ENCODE measurements at regions of chr17 and their contacts with region 1.

Region 1: GRCh38 chr17:74671031-74671771 is 41.5 kb downstream of the CD300LF start:
- DNase-seq: peak; percentile 88
- H3K4me3 ChIP-seq: no peak overlapping the region
- H3K27ac ChIP-seq: no peak overlapping the region
- H3K4me1 ChIP-seq: no peaks in the 10 kb centered on the region
- H3K27me3 ChIP-seq: peaks cover 73% of the 10 kb centered on the region
- CTCF ChIP-seq: no peak

Region 2: GRCh38 chr17:74274060-74274708 is 397.0 kb before region 1 on chr17 and contains the start of gene DNAI2:
- CTCF ChIA-PET with region 1: no interaction called
- POLR2A ChIA-PET with region 1: no interaction called
- intact Hi-C with region 1: no loop called
- DNase-seq: no peak
- H3K4me3 ChIP-seq: no peak within 1 kb of the TSS
- H3K27ac ChIP-seq: no peak within 1 kb of the TSS
- H3K4me1 ChIP-seq: no peaks in the 10 kb centered on the region
- H3K27me3 ChIP-seq: peaks cover 3% of the 10 kb centered on the region
- CTCF ChIP-seq: no peak
- total RNA-seq, gene DNAI2: not detected in 2 replicates

Region 3: DNA sequence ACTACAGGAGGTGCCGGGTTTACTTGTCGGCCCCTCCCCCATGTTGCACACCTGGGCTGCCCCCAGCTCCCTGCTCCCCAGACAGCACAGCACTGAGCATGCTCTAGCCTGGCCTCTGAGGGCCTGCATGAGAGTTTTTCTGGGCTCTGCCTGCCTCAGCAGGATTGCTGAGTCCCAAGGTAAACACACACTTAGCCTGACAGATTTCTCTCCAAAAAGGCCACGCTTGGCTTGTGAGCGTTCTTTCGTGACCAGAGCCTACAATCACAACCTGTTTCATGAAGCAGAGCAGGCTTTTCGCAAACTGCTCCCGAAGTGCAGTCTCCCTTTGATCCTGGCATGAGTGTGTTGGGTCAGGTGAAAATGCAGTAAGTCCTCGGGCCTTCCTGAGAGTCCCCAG is 37.9 kb before region 1 on chr17:
- CTCF ChIA-PET with region 1: interaction called, 14 read pairs
- POLR2A ChIA-PET with region 1: no interaction called
- intact Hi-C with region 1: no loop called
- DNase-seq: no peak
- H3K4me3 ChIP-seq: no peak overlapping the region
- H3K27ac ChIP-seq: no peak overlapping the region
- H3K4me1 ChIP-seq: no peaks in the 10 kb centered on the region
- H3K27me3 ChIP-seq: no peaks in the 10 kb centered on the region
- CTCF ChIP-seq: no peak